AG04449 (cell line): ENCODE measurements at regions of chr18 and their contacts with region 1.

Region 1: DNA sequence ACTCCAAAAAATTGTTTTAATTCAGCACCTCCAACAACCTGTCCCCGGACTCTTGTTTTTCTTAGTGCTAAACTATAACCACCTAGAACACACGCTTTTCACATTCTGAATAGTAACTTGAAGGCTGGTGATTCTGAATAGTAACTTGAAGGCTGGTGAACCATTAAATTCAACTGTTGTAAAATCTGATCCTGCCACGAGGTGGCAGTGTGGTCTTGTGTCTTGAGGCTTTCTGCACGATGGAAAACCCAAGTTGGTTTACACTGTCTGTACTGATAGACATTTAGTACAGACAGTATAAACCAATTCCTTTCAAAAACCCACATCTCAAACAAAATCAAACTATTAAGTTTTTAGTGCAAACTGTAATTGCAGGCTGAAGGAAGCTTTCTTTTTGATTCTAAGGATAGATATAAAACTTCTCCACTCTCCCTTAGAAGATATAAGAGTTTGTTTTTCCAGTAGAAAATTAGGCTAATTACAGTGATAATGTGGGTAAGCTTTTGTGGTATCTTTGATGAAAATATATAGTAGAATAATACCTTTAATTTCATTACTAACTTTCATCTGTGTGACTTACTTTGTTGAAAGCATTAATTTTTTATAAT is 57.6 kb downstream of the VAPA start:
- DNase-seq: peak; percentile 26
- H3K4me3 ChIP-seq: no peak overlapping the region
- CTCF ChIP-seq: peak; percentile 45

Region 2: DNA sequence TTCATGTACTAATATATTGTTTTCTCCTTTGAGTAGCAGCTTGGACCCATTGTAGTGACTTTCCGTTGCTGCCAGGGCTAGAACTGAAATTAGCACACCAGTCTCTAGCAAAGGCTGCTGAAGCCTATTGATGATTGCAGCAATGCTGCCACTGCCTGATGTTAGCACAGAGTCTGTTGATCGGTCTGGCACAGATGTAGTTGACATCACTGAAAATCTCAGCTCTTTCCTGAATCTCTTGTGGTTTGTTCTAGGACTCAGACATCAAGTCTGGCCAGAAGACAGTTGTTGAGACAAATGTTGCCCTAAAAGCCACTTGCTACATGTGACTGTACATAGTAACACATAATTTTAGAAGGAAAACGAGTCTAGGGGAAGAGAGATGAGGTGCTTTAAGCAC is 10.4 kb before region 1 on chr18:
- CTCF ChIA-PET with region 1: interaction called, 16 read pairs
- POLR2A ChIA-PET with region 1: no interaction called
- DNase-seq: no peak
- H3K4me3 ChIP-seq: no peak overlapping the region
- CTCF ChIP-seq: no peak

Region 3: GRCh38 chr18:9996094-9996493 is 24.7 kb after region 1 on chr18:
- CTCF ChIA-PET with region 1: interaction called, 13 read pairs
- POLR2A ChIA-PET with region 1: no interaction called
- DNase-seq: no peak
- H3K4me3 ChIP-seq: no peak overlapping the region
- CTCF ChIP-seq: no peak

Region 4: DNA sequence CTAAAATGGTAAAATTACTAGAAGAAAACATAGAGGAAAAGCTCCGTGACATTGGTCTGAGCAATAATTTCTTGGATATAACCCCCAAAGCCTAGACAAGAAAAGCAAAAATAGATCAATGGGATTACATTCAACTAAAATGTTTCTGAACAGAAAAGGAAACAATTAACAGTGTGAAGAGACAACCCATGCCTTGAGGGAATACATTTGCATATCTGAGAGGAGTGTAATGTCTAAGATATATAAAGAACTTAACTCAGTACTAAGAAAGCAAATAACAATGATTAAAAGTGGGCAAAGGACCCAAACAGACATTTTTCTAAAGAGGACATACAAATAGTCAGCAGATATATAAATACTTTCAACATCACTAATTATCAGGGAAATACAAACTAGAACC is 148.6 kb after region 1 on chr18:
- CTCF ChIA-PET with region 1: no interaction called
- POLR2A ChIA-PET with region 1: no interaction called
- DNase-seq: no peak
- H3K4me3 ChIP-seq: no peak overlapping the region
- CTCF ChIP-seq: no peak

Region 5: GRCh38 chr18:10519999-10520935 is 548.9 kb after region 1 on chr18:
- CTCF ChIA-PET with region 1: interaction called, 314 read pairs
- POLR2A ChIA-PET with region 1: no interaction called
- DNase-seq: peak; percentile 63
- H3K4me3 ChIP-seq: peak overlapping the region; percentile 24; the same call in 1 of the 2 replicates
- CTCF ChIP-seq: peak; percentile 87